Activated CD8-positive, alpha-beta T cell treated with anti-CD3 and anti-CD28 coated beads, Interleukin-2, amount 10 ng/mL, durations not matched to agents 7 days and 5 days (primary cell): ENCODE measurements at regions of chr17 and their contacts with region 1.

Region 1: GRCh38 chr17:40559954-40560591 is 5.2 kb downstream of the CCR7 start:
- DNase-seq: peak; percentile 89
- ATAC-seq: peak; percentile 41
- H3K4me3 Mint-ChIP-seq: peak overlapping the region; percentile 86
- H3K27ac Mint-ChIP-seq: peak overlapping the region; percentile 93
- H3K4me1 Mint-ChIP-seq: peaks cover 89% of the 10 kb centered on the region
- H3K27me3 Mint-ChIP-seq: no peaks in the 10 kb centered on the region

Region 2: GRCh38 chr17:40362696-40363110 is 197.4 kb before region 1 on chr17:
- CTCF ChIA-PET with region 1: interaction called, 33 read pairs
- POLR2A ChIA-PET with region 1: interaction called, 3 read pairs
- DNase-seq: peak; percentile 93
- ATAC-seq: peak; percentile 93
- H3K4me3 Mint-ChIP-seq: peak overlapping the region; percentile 72
- H3K27ac Mint-ChIP-seq: no peak overlapping the region
- H3K4me1 Mint-ChIP-seq: peaks cover 41% of the 10 kb centered on the region
- H3K27me3 Mint-ChIP-seq: peaks cover 13% of the 10 kb centered on the region

Region 3: DNA sequence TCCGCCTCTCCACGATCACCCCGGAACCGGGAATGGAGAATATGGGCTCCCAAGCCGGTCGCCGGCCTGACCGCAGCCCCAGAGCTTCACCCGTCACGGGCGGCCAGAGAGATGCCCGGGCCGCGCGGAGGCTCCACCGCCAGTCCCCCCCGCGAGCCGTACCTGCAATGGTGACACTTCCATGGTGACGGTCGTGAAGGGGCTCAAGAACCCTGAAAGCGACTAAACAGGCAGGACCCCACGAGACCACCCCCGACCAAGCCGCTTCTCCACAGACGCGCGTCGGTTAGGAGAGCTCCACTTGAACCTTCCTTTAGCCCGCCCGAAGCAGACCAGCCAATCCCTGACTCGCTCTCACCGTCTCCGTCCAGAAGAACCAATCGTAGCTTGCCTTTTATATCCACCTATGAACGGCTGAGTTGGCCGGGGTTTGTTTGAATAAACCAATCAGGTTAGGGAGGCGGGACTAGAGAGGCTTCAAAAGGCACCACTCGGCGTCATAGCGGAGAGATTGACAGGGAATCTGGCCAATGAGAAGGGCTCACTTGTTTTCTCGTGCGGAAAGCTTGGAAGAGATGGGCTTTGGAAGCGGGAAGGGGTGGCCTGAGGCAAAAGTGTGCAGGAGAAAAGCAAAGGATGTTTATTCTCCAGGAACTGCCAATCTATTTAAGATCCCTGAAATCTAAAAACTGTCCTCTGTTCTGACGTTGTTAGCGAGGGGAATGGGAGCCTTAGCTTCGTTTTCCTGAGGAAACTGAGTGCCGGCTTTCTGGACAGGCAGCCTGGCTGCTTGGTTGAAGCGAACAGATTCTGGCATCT is 142.3 kb before region 1 on chr17 and contains the start of gene TOP2A:
- CTCF ChIA-PET with region 1: interaction called, 40 read pairs
- POLR2A ChIA-PET with region 1: interaction called, 12 read pairs
- DNase-seq: peak; percentile 98
- ATAC-seq: peak; percentile 97
- H3K4me3 Mint-ChIP-seq: peak within 1 kb of the TSS; percentile 98
- H3K27ac Mint-ChIP-seq: peak within 1 kb of the TSS; percentile 98
- H3K4me1 Mint-ChIP-seq: peaks cover 50% of the 10 kb centered on the region
- H3K27me3 Mint-ChIP-seq: no peaks in the 10 kb centered on the region
- total RNA-seq, gene TOP2A: 517 to 567 TPM

Region 4: GRCh38 chr17:40474419-40475002 is 85.6 kb before region 1 on chr17:
- CTCF ChIA-PET with region 1: interaction called, 17 read pairs
- POLR2A ChIA-PET with region 1: interaction called, 3 read pairs
- DNase-seq: no peak
- ATAC-seq: no peak
- H3K4me3 Mint-ChIP-seq: no peak overlapping the region
- H3K27ac Mint-ChIP-seq: peak overlapping the region; percentile 46
- H3K4me1 Mint-ChIP-seq: peaks cover 34% of the 10 kb centered on the region
- H3K27me3 Mint-ChIP-seq: peaks cover 5% of the 10 kb centered on the region

Region 5: GRCh38 chr17:40582328-40582901 is 22.3 kb after region 1 on chr17:
- CTCF ChIA-PET with region 1: interaction called, 29 read pairs
- POLR2A ChIA-PET with region 1: interaction called, 68 read pairs
- DNase-seq: peak; percentile 83
- ATAC-seq: peak; percentile 83
- H3K4me3 Mint-ChIP-seq: peak overlapping the region; percentile 56
- H3K27ac Mint-ChIP-seq: peak overlapping the region; percentile 88
- H3K4me1 Mint-ChIP-seq: peaks cover 92% of the 10 kb centered on the region
- H3K27me3 Mint-ChIP-seq: no peaks in the 10 kb centered on the region

Region 6: GRCh38 chr17:40615295-40615988 is 55.4 kb after region 1 on chr17:
- CTCF ChIA-PET with region 1: interaction called, 313 read pairs
- POLR2A ChIA-PET with region 1: interaction called, 454 read pairs
- DNase-seq: peak; percentile 47
- ATAC-seq: peak; percentile 24
- H3K4me3 Mint-ChIP-seq: peak overlapping the region; percentile 54
- H3K27ac Mint-ChIP-seq: peak overlapping the region; percentile 85
- H3K4me1 Mint-ChIP-seq: peaks cover 88% of the 10 kb centered on the region
- H3K27me3 Mint-ChIP-seq: no peaks in the 10 kb centered on the region

Region 7: DNA sequence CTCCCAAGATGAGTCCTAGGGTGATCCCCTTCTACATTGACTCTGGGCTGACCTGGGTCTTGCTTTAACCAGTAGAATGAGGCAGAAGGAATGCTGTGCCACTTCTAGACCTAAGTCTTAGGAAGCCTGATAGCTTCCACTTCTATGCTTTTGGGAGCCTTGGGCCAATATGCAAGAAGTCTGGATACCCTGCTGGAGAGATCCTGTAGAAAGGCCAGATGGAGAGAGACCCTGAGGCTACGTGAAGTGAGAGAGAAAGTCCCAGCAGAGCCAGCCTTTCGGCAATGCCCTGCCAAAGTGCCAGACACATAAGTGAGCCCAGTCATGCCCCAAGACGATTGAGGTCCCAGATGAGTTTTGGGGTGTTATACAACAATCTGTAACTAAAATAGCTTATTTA is 103.2 kb after region 1 on chr17:
- CTCF ChIA-PET with region 1: no interaction called
- POLR2A ChIA-PET with region 1: no interaction called
- DNase-seq: no peak
- ATAC-seq: no peak
- H3K4me3 Mint-ChIP-seq: no peak overlapping the region
- H3K27ac Mint-ChIP-seq: no peak overlapping the region
- H3K4me1 Mint-ChIP-seq: peaks cover 14% of the 10 kb centered on the region
- H3K27me3 Mint-ChIP-seq: peaks cover 44% of the 10 kb centered on the region